ENCODE measurements at regions of chr4 and their contacts with region 1.

Region 1: GRCh38 chr4:5710961-5711478 is at the start of gene EVC:
- DNase-seq: peak; percentile 42 to 43
- ATAC-seq: peak; percentile 58 to 64
- H3K4me3 ChIP-seq: peak within 1 kb of the TSS; percentile 39 to 47 (median 43)
- H3K27ac ChIP-seq: peak within 1 kb of the TSS; percentile 32 to 67 (median 54)
- H3K4me1 ChIP-seq: no peaks in the 10 kb centered on the region
- H3K27me3 ChIP-seq: peaks cover 8 to 23% (median 16%) of the 10 kb centered on the region in 3 donors
- CTCF ChIP-seq: no peak
- POLR2A ChIP-seq: peak; percentile 24 to 35
- total RNA-seq, gene EVC: 1.5 to 9.8 (median 2.0) TPM

Region 2: GRCh38 chr4:5747738-5748365 is 36.8 kb after region 1 on chr4:
- in situ Hi-C with region 1: no loop called
- intact Hi-C with region 1: loop called (anchors 5 kb)
- DNase-seq: no peak
- ATAC-seq: peak in 1 of 2 donors; percentile 56
- H3K4me3 ChIP-seq: no peak overlapping the region
- H3K27ac ChIP-seq: no peak overlapping the region
- H3K4me1 ChIP-seq: peaks cover 0 to 3% of the 10 kb centered on the region in 2 donors
- H3K27me3 ChIP-seq: no peaks in the 10 kb centered on the region
- CTCF ChIP-seq: no peak
- POLR2A ChIP-seq: no peak

Measured in gastrocnemius medialis (tissue), 4 donors.